GM13977 (cell line): ENCODE measurements at regions of chr16 and their contacts with region 1.

Region 1: DNA sequence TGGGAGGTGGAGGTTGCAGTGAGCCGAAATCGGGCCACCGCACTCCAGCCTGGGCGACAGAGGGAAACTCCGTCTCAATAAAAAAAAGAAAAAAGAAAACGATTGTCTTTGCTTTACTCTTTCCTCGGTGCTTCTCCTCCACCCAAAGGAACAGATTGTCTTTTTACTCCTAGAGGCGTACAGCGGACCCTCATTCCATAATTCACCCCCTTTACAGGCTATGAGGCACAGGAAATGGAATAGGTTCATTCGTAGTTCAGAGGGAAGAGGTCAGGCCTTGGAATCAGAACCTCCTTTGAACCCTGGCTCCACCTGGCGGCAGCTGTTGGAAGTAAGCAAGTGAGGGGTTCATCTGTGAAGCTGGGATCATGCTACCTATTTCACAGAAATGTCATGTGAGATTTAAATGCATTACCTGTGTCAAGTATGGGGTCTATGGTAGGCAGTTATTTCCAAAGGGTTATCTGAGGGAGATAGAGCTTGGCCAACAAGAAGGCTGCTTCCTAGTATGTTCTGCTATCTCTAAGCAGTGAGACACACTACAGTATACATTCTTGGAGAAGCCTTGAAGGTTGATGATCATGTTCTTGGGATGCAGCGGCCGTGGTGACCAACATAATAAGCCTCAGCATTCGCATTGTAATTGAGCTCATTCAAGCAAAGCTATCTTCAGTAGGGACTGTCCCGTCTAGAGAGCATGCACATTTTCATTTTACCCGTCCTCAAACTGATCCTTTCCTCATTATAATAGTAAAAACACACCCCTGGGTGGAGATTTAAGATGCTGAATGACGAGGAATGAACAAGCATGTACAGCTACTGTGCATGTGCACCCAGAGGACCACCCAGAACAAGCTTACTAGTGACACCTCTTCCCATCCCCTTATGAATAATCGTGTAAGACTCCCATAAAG is 18.7 kb upstream of the ZNF689 start:
- DNase-seq: peak; percentile 75
- CTCF ChIP-seq: peak; percentile 83

Region 2: DNA sequence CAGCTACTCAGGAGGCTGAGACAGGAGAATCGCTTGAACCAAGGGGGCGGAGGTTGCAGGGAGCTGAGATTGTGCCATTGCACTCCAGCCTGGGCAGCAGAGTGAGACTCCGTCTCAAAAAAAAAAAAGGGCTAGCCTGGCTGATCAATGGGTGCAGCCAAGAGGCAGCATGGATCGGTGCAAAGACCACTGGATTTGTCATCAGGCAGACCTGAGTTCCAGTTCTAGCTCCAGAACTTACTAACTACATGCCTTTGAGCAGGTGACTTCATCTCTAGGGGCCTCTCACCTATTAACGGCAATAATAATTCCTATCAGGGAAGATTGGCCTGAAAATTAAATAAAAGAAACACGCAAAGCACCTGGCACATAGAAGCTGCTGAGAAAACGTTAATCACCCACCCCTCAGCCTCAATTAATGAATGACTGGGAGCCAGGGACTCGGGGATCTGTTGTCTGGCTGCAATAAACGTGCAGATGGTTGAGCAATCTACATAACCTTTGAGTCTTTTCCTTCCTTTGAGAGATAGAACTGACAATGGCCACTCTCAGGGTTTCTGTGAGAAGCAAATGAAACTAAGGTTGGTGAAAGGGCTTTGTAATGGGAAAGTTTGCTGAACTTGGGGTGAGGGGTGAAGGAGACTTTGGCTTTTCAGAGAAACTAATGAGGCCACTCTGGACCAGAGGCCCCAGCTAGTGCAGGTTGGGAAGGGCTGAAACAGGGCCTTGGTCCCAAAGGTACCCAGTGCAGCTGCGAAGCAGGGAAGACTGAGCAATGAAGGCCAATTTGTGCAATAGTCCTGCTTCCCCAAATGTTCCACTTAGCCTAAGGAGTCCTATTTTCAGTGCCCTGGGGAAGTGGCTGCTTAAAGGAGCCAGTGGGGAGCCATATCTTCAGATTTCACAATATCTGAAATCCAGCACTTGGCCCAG is 737.1 kb before region 1 on chr16:
- in situ Hi-C with region 1: no loop called
- DNase-seq: no peak
- CTCF ChIP-seq: no peak

Region 3: DNA sequence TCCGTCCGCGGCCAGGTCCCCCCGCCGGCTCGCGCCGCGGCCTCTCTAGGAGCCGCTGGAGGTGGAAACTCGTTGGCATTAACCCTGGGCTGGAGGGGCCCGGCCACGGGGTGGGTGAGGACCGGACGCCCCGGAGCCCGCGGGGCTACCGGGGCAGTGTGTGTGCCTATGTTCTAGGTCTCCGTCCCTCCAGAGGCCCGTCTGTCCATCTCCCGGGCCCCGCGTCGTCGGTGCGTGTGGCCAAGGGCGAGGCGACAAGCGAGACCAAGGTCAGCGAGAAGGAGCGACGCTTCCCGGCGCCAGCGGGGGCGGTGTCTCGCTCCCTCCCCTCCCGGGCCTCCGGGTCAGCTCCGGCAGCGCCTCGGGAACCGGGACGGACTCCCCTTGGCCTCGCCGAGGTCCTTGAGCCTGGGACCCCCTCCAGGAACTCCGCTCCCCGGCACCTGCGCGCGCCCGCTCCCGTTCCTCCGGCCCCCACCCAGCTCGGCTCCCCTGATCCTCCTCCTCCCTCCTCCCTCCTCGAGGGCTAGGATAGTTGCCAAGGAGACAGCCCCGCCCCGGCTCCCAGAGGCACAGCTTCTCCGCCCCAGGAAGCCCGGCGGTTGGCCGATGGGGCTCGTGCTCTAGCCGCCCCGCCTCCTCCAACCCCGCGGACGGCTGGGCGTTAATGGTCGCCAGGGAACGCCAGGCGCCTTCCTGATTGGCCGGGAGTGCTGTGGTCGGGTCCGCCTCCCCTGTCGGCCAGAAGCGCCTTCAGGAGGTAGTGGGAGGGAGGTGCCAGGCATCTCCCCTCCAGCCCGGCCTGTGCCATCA is 101.9 kb before region 1 on chr16:
- in situ Hi-C with region 1: loop called (anchors 25 kb)
- DNase-seq: peak; percentile 99
- CTCF ChIP-seq: peak; percentile 4

Region 4: DNA sequence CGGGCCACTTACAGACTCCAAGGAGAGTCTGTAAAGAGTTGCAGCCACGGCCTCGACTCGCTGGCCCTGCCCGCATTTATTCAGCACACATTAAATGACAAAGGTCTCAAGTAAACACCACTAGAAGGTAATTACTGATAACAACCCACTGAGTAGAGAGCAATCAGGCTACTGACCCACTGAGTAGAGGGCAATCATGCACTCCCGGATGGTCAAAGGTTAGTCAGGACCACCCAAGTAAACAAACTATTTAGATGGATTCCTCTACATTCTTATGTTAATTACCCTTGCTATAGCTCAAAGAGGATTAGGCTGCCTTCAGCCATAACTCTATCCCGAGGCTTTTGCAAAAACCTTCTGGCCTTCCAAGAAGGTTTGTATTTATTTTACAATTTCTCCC is 1214.0 kb after region 1 on chr16:
- in situ Hi-C with region 1: no loop called
- DNase-seq: no peak
- CTCF ChIP-seq: no peak